Activated CD4-positive, alpha-beta T cell treated with anti-CD3 and anti-CD28 coated beads for 36 hours (primary cell): ENCODE measurements at regions of chrX and their contacts with region 1.

Region 1: GRCh38 chrX:72258174-72258573 is 18.9 kb downstream of the RPS4X start:
- DNase-seq: no peak
- ATAC-seq: no peak
- H3K4me3 Mint-ChIP-seq: no peak overlapping the region
- H3K27ac Mint-ChIP-seq: no peak overlapping the region
- H3K4me1 Mint-ChIP-seq: peaks cover 8% of the 10 kb centered on the region
- H3K27me3 Mint-ChIP-seq: peaks cover 25% of the 10 kb centered on the region

Region 2: DNA sequence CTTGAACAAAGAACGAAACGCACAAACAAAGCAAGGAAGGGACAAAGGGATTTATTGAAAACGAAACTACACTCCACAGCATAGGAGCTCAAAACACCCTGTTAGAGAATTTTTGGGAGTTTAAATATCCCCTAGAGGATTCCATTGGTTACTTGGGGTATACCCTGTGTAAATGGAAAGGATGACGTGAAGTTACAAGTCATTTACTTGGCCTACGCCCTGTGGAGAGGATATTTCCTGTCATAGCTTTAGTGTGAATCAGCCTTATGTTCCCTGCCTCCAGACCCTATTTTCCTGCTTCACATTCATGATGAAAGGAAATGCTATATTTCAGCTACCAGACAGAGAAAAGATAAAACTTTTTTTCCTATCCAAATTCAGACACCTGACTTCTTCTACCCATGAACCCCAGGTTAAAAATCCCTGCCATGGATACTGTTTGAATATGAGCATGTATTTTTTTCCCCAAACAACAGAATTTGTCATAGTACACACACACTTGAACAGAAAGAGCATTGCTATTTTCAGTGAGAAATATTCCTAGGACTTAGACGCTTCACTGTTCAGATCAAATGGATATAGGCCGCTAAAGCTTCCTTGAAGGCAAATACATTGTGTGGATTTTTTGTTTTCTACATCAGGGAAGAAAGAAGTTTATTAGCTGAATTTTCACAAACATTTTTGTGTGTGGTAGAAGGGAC is 56.2 kb before region 1 on chrX:
- CTCF ChIA-PET with region 1: no interaction called
- POLR2A ChIA-PET with region 1: no interaction called
- intact Hi-C with region 1: no loop called
- DNase-seq: no peak
- ATAC-seq: no peak
- H3K4me3 Mint-ChIP-seq: no peak overlapping the region
- H3K27ac Mint-ChIP-seq: no peak overlapping the region
- H3K4me1 Mint-ChIP-seq: no peaks in the 10 kb centered on the region
- H3K27me3 Mint-ChIP-seq: no peaks in the 10 kb centered on the region

Region 3: DNA sequence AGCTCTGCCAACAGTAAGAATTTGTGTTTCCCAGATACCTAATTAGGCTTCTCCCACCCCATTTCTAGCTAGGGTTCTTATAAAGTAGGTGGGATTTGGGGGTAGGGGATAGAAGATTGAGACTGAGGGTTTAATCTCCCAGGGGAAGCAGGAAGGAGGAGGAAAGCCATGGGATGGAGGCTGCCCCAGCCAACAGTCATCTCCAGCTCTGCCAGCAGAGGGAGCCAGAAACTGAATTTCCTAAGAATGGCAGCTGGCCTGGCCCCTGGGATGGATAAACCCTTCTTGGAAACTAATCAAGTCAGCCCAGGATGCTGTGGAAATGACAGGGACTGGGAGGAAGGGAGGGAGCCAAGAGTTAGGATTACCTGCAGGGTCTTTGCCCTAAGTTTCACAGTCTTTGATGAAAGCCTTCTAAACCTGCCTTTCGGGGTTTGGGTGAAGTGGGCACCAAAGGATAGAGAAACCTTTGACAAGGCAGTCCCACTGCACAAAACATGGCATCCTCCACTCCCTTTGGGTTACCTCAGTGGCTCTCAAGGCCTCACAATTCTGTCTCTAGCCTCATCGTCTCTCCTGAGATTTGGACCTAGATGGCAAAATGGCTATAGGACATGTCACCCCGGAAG is 12.6 kb before region 1 on chrX:
- CTCF ChIA-PET with region 1: interaction called, 17 read pairs
- POLR2A ChIA-PET with region 1: interaction called, 4 read pairs
- intact Hi-C with region 1: no loop called
- DNase-seq: peak; percentile 61
- ATAC-seq: peak; percentile 63
- H3K4me3 Mint-ChIP-seq: no peak overlapping the region
- H3K27ac Mint-ChIP-seq: no peak overlapping the region
- H3K4me1 Mint-ChIP-seq: peaks cover 9% of the 10 kb centered on the region
- H3K27me3 Mint-ChIP-seq: no peaks in the 10 kb centered on the region

Region 4: GRCh38 chrX:72492499-72492898 is 234.3 kb after region 1 on chrX:
- CTCF ChIA-PET with region 1: no interaction called
- POLR2A ChIA-PET with region 1: no interaction called
- intact Hi-C with region 1: no loop called
- DNase-seq: no peak
- ATAC-seq: no peak
- H3K4me3 Mint-ChIP-seq: no peak overlapping the region
- H3K27ac Mint-ChIP-seq: no peak overlapping the region
- H3K4me1 Mint-ChIP-seq: no peaks in the 10 kb centered on the region
- H3K27me3 Mint-ChIP-seq: no peaks in the 10 kb centered on the region